ENCODE measurements at regions of chr4 and their contacts with region 1.

Region 1: GRCh38 chr4:13654158-13654797 is 26.8 kb upstream of the BOD1L1 start:
- DNase-seq: peak; percentile 89
- H3K4me3 ChIP-seq: peak overlapping the region; percentile 50
- H3K27ac ChIP-seq: peak overlapping the region; percentile 83
- H3K4me1 ChIP-seq: peaks cover 16% of the 10 kb centered on the region
- H3K27me3 ChIP-seq: no peaks in the 10 kb centered on the region
- CTCF ChIP-seq: peak; percentile 74

Region 2: GRCh38 chr4:12852338-12853307 is 801.7 kb before region 1 on chr4:
- CTCF ChIA-PET with region 1: no interaction called
- POLR2A ChIA-PET with region 1: no interaction called
- intact Hi-C with region 1: loop called (anchors 2 kb)
- DNase-seq: peak; percentile 78
- H3K4me3 ChIP-seq: no peak overlapping the region
- H3K27ac ChIP-seq: no peak overlapping the region
- H3K4me1 ChIP-seq: no peaks in the 10 kb centered on the region
- H3K27me3 ChIP-seq: no peaks in the 10 kb centered on the region
- CTCF ChIP-seq: peak; percentile 71

Region 3: DNA sequence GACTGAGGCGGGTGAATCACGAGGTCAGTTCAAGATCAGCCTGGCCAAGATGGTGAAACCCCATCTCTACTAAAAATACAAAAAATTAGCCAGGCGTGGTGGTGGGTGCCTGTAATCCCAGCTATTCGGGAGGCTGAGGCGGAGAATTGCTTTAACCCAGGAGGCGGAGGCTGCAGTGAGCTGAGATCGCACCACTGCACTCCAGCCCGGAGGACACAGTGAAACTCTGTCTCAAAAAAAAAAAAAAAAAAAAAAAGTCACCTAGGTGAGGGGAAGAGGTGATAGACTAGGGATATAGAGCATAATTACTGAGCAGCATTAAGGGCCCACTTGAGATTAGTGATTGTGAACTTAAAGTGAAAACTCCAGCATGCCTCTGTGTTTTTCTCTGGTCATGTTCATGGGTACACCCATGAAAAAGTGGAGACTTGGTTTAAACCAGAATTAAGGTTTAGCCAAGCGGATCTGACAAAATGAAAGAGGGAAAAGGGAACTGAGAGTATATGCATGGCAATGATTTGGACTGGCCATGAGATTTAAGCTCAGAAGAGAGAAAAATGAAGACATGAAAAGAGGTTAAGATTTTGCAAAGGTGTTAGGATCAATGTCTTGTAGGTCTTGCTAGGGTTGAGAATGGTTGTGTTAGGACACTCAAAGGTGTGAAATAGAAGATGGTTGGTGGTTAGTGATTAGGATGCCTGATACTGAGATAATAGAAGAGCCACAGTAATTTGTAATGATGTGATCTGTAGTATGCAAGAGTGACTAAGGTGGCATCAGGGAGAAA is 275.1 kb before region 1 on chr4:
- CTCF ChIA-PET with region 1: no interaction called
- POLR2A ChIA-PET with region 1: no interaction called
- intact Hi-C with region 1: no loop called
- DNase-seq: no peak
- H3K4me3 ChIP-seq: no peak overlapping the region
- H3K27ac ChIP-seq: no peak overlapping the region
- H3K4me1 ChIP-seq: no peaks in the 10 kb centered on the region
- H3K27me3 ChIP-seq: no peaks in the 10 kb centered on the region
- CTCF ChIP-seq: no peak

Region 4: GRCh38 chr4:14559646-14560045 is 905.4 kb after region 1 on chr4:
- CTCF ChIA-PET with region 1: interaction called, 3 read pairs
- POLR2A ChIA-PET with region 1: interaction called, 3 read pairs
- intact Hi-C with region 1: loop called (anchors 1 kb)
- DNase-seq: peak; percentile 93
- H3K4me3 ChIP-seq: no peak overlapping the region
- H3K27ac ChIP-seq: peak overlapping the region; percentile 92
- H3K4me1 ChIP-seq: peaks cover 42% of the 10 kb centered on the region
- H3K27me3 ChIP-seq: no peaks in the 10 kb centered on the region
- CTCF ChIP-seq: no peak

Region 5: GRCh38 chr4:14743601-14744000 is 1089.3 kb after region 1 on chr4:
- CTCF ChIA-PET with region 1: no interaction called
- POLR2A ChIA-PET with region 1: no interaction called
- intact Hi-C with region 1: loop called (anchors 2 kb)
- DNase-seq: peak; percentile 98
- H3K4me3 ChIP-seq: no peak overlapping the region
- H3K27ac ChIP-seq: peak overlapping the region; percentile 99
- H3K4me1 ChIP-seq: peaks cover 44% of the 10 kb centered on the region
- H3K27me3 ChIP-seq: no peaks in the 10 kb centered on the region
- CTCF ChIP-seq: no peak

Region 6: DNA sequence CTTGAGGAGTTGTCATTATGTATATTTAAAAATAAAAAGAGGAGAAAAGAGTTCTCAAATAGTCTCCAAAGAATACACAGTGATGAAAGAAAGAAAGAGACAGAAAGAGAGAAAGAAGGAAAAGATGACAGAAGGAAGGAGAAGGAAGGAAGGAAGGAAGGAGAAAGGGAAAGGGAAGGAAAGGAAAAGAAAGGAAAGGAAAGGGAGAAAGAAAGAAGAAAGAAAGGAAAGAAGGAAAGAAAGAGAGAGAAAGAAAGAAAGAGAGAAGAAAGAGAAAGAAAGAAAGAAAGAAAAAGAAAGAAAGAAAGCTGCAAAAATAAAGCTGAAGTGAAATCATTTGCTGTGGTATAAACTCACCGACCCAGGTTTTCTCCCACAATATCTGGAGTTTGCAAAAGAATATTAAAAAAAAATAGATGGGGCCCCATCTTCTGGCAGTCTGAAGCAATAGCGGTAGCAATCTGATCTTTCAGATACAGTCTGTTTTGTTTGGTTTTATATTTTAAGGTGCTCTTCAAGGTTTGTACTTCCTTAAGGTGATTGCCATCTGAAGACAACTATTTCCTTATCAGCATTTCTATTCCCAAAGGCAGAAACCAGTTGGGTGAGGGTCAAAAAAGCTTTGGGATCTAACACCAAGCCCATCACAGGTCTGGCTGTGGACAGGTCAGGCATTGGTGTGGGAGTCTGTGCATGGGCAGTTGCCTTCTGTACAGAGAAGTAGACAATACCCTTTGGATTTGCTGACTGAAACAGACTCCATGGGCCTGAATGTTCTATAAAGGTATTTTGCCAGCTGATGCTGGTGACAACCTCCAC is 1508.4 kb after region 1 on chr4:
- CTCF ChIA-PET with region 1: no interaction called
- POLR2A ChIA-PET with region 1: no interaction called
- intact Hi-C with region 1: loop called (anchors 5 kb)
- DNase-seq: peak; percentile 67
- H3K4me3 ChIP-seq: no peak overlapping the region
- H3K27ac ChIP-seq: peak overlapping the region; percentile 52
- H3K4me1 ChIP-seq: peaks cover 17% of the 10 kb centered on the region
- H3K27me3 ChIP-seq: no peaks in the 10 kb centered on the region
- CTCF ChIP-seq: peak; percentile 70